IMR-90 (cell line): ENCODE measurements at regions of chr17 and their contacts with region 1.

Region 1: DNA sequence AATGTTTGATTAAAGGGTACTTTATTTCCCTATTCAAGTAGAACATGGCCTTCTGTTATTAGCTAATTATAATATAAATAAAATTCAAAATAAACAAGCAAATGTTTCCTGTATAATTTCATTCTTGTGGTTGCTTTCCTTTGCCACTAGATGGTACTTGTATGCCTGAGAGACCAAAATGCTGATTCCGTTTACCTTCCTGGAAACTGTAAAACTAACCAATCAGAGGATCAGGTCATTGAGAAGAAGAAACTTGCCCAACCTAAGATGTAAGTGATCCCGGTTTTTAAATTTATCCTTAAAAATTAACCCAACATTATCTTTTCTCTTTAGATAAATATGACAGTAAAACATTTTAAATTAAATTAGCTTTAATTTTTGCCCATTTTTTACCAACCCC is 8.1 kb upstream of the ABCA5 start:
- DNase-seq: peak; percentile 60
- ATAC-seq: peak; percentile 75
- H3K4me3 ChIP-seq: no peak overlapping the region
- H3K27ac ChIP-seq: no peak overlapping the region
- H3K4me1 ChIP-seq: no peaks in the 10 kb centered on the region
- H3K27me3 ChIP-seq: no peaks in the 10 kb centered on the region
- CTCF ChIP-seq: peak; percentile 60
- POLR2A ChIP-seq: no peak
- RAD21 ChIP-seq: peak; percentile 62

Region 2: GRCh38 chr17:70622368-70623260 is 1287.6 kb after region 1 on chr17:
- CTCF ChIA-PET with region 1: no interaction called
- POLR2A ChIA-PET with region 1: no interaction called
- dilution Hi-C with region 1: no loop called
- in situ Hi-C with region 1: no loop called
- intact Hi-C with region 1: loop called (anchors 10 kb)
- DNase-seq: peak; percentile 18
- ATAC-seq: peak; percentile 63
- H3K4me3 ChIP-seq: no peak overlapping the region
- H3K27ac ChIP-seq: no peak overlapping the region
- H3K4me1 ChIP-seq: no peaks in the 10 kb centered on the region
- H3K27me3 ChIP-seq: no peaks in the 10 kb centered on the region; the same call in none of the 2 replicates
- CTCF ChIP-seq: peak; percentile 36
- POLR2A ChIP-seq: no peak
- RAD21 ChIP-seq: peak; percentile 42; the same call in 1 of the 2 replicates